ENCODE measurements at regions of chr1 and their contacts with region 1.

Region 1: DNA sequence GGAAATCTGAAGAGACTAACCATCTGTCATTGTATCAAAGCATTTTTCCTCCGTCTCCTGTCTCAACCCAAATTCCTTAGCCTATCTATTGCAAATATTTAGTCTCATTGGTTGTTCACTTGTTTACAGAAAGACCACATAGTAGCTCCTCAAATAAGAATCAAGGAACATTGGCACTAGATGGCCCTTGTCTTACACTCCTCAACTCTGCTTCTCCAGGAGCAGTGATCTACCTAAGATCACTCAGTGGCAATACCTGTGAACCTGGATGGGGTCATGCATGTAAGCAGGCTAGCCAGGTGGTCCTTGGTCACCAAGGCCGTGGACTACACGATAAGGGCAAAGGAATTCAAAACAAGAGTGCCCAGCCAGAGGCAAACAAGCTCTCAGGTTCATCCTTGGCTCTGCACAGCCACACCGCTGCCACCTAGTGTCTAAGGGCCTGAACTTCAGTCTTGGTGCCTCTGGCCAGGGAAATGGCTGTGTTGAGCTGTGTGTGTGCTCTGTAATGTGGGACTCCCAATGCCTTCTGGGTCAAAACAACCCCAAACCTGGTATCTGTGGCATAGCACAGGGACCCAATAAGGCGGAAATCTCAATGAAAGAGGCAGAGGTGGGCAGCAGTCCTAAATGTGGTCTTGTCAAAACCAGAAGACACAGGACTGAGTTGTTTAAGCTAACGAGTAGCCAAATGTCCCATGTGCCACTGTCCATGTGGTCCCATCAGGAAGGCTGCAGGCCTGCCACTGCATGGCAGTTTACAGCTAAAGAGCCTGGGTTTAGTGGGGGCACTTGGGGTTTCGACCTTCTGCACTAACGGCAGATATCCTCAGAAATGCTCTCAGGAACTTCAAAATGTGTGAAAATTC is 54.5 kb downstream of the GPR161 start:
- DNase-seq: peak; percentile 51 to 95 (median 78)

Region 2: GRCh38 chr1:167617153-167618147 is 464.8 kb before region 1 on chr1:
- intact Hi-C with region 1: no loop called
- DNase-seq: peak in 1 of 10 donors; percentile 59

Region 3: GRCh38 chr1:167715157-167715999 is 366.9 kb before region 1 on chr1:
- intact Hi-C with region 1: loop called (anchors 10 kb)
- DNase-seq: peak; percentile 60 to 95 (median 80)

Region 4: DNA sequence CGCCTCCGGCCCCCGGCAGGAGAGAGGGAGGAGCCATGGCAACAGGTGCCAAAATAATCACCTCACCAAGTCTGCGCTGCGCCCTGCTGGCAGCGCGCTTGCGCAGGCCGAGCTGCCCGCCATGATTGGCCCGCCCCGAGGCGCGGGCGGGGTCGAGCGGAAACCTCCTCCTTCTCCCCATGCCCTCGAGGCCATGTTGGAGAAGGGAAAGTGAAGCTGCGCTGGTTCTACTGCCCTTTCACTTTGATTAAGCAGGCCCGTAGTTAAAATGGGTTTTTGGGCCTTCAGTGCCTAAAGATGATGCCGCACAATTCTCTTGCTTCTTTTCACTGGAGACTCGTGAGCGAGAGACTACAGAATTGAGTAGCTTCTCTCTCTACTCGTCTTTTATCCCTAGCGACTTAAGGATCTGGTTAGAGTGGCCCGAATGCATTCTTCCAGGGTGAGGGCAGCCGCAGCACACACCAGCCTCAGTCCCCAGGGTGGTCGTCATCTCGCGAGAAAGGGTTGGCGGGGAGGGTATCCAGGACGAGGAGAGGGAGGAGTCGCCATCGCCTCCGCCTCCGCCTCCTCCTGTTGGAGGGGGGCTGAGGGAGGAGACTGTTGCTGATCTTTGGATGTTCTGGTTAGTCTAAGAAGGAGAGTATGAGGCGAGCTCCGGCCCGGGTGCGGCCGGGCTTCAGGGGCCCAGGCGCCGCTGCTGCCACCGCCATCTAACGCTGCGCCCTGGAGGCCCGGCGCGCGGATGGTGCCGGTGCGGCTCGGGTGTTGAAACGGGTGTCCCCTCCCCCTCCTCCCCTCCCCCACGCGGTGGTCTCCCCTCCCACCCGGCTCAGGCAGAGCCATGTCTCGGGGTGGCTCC is 145.9 kb before region 1 on chr1 and contains the start of gene DCAF6:
- intact Hi-C with region 1: loop called (anchors 2 kb)
- DNase-seq: peak; percentile 90 to 99 (median 94)

Region 5: DNA sequence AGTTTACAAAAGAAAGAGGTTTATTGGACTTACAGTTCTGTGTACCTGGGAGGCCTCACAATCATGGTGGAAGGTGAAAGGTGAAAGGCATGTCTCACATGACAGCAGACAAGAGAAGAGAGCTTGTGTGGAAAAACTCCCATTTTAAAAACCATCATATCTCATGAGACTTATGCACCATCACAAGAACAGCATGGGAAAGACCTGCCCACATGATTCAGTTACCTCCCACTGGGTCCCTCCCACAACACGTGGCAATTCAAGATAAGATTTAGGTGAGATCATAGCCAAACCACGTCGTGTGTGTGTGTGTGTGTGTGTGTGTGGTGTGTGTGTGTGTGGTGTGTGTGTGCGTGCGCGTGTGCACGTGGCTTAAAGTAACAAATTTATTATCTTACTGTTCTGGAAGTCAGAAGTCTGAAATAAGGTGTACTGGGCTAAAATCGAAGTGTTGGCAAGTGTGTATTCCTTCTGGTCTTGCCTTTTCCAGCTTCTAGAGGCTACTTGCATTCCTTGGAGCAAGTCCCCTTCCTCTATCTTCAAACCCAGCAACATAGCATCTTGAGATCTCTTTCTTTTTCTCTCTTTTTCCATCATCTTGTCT is 97.3 kb before region 1 on chr1:
- intact Hi-C with region 1: no loop called
- DNase-seq: no peak

Measured in posterior cingulate gyrus (tissue), 11 donors.